ENCODE measurements at regions of chr2 and their contacts with region 1.

Region 1: GRCh38 chr2:28377984-28378678 is 14.5 kb upstream of the FOSL2 start:
- DNase-seq: peak; percentile 93
- H3K4me3 Mint-ChIP-seq: peak overlapping the region; percentile 61
- H3K27ac Mint-ChIP-seq: peak overlapping the region; percentile 70
- H3K4me1 Mint-ChIP-seq: peaks cover 29% of the 10 kb centered on the region
- H3K27me3 Mint-ChIP-seq: no peaks in the 10 kb centered on the region
- CTCF ChIP-seq: no peak

Region 2: DNA sequence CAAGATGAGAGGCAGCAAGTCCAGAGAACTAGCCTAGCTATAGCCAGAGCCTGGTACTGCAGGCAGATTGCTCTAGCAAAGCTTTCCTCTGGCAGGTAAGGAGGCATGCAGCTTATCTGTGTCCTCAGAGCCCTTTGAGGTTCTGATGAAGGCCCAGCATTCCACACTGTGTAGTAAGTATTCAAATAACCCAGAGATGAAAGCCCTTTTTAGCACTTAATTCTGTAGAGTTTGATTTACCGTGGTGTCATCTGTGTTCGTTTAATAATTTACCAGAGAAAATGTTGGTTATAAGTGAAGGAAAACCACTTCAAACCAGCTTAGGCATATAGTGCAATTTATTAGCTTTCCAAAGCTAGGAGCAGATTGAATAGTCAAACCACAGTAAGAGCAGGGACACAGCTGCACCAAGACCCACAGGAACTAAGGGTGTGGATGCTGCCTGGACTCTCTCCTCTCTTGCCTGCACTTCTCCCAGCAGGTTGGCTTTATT is 261.0 kb before region 1 on chr2:
- CTCF ChIA-PET with region 1: no interaction called
- POLR2A ChIA-PET with region 1: no interaction called
- intact Hi-C with region 1: no loop called
- DNase-seq: no peak
- H3K4me3 Mint-ChIP-seq: no peak overlapping the region
- H3K27ac Mint-ChIP-seq: no peak overlapping the region
- H3K4me1 Mint-ChIP-seq: no peaks in the 10 kb centered on the region
- H3K27me3 Mint-ChIP-seq: no peaks in the 10 kb centered on the region
- CTCF ChIP-seq: no peak

Region 3: DNA sequence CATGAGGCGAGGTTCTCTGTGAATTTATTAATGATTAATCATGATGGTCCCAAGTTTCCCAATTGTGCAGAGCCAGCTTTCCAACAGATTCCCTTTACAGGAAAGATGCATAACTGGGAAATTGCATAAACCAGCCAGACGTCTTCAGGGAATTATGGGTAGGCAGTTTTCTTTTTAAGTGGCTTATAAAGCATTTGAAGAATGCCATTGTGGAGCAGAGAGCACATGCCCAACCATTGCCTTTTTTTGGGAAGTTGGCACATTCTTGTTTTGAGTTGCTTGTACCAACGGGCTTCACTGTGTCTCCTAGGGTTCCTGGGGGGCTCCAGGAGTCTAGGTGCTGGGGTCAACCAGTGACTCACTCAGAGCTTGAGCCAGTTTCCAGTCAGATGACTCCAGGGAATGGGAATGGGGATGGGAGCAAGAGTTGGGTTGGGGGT is 217.1 kb before region 1 on chr2:
- CTCF ChIA-PET with region 1: interaction called, 4 read pairs
- POLR2A ChIA-PET with region 1: interaction called, 13 read pairs
- intact Hi-C with region 1: no loop called
- DNase-seq: peak; percentile 82
- H3K4me3 Mint-ChIP-seq: no peak overlapping the region
- H3K27ac Mint-ChIP-seq: peak overlapping the region; percentile 89
- H3K4me1 Mint-ChIP-seq: peaks cover 45% of the 10 kb centered on the region
- H3K27me3 Mint-ChIP-seq: no peaks in the 10 kb centered on the region
- CTCF ChIP-seq: no peak

Region 4: GRCh38 chr2:28166956-28167355 is 211.2 kb before region 1 on chr2:
- CTCF ChIA-PET with region 1: interaction called, 3 read pairs
- POLR2A ChIA-PET with region 1: interaction called, 16 read pairs
- intact Hi-C with region 1: no loop called
- DNase-seq: peak; percentile 27
- H3K4me3 Mint-ChIP-seq: no peak overlapping the region
- H3K27ac Mint-ChIP-seq: no peak overlapping the region
- H3K4me1 Mint-ChIP-seq: peaks cover 49% of the 10 kb centered on the region
- H3K27me3 Mint-ChIP-seq: no peaks in the 10 kb centered on the region
- CTCF ChIP-seq: no peak

Region 5: GRCh38 chr2:28338046-28338817 is 39.9 kb before region 1 on chr2:
- CTCF ChIA-PET with region 1: interaction called, 4 read pairs
- POLR2A ChIA-PET with region 1: interaction called, 32 read pairs
- intact Hi-C with region 1: no loop called
- DNase-seq: peak; percentile 82
- H3K4me3 Mint-ChIP-seq: no peak overlapping the region
- H3K27ac Mint-ChIP-seq: peak overlapping the region; percentile 86
- H3K4me1 Mint-ChIP-seq: peaks cover 19% of the 10 kb centered on the region
- H3K27me3 Mint-ChIP-seq: no peaks in the 10 kb centered on the region
- CTCF ChIP-seq: no peak

Region 6: GRCh38 chr2:28356095-28356911 is 21.8 kb before region 1 on chr2:
- CTCF ChIA-PET with region 1: interaction called, 3 read pairs
- POLR2A ChIA-PET with region 1: interaction called, 27 read pairs
- intact Hi-C with region 1: no loop called
- DNase-seq: peak; percentile 84
- H3K4me3 Mint-ChIP-seq: no peak overlapping the region
- H3K27ac Mint-ChIP-seq: peak overlapping the region; percentile 73
- H3K4me1 Mint-ChIP-seq: peaks cover 22% of the 10 kb centered on the region
- H3K27me3 Mint-ChIP-seq: no peaks in the 10 kb centered on the region
- CTCF ChIP-seq: no peak